ENCODE measurements at regions of chr3 and their contacts with region 1.

Region 1: GRCh38 chr3:52446631-52447511 is 2.0 kb upstream of the SEMA3G start:
- DNase-seq: peak; percentile 81
- H3K4me3 ChIP-seq: no peak overlapping the region
- H3K27ac ChIP-seq: no peak overlapping the region
- H3K4me1 ChIP-seq: peaks cover 0 to 17% (median 8%) of the 10 kb centered on the region in 4 donors
- H3K27me3 ChIP-seq: no peaks in the 10 kb centered on the region
- CTCF ChIP-seq: peak; percentile 98 to 100 (median 100)
- EP300 ChIP-seq: no peak
- POLR2A ChIP-seq: no peak

Region 2: DNA sequence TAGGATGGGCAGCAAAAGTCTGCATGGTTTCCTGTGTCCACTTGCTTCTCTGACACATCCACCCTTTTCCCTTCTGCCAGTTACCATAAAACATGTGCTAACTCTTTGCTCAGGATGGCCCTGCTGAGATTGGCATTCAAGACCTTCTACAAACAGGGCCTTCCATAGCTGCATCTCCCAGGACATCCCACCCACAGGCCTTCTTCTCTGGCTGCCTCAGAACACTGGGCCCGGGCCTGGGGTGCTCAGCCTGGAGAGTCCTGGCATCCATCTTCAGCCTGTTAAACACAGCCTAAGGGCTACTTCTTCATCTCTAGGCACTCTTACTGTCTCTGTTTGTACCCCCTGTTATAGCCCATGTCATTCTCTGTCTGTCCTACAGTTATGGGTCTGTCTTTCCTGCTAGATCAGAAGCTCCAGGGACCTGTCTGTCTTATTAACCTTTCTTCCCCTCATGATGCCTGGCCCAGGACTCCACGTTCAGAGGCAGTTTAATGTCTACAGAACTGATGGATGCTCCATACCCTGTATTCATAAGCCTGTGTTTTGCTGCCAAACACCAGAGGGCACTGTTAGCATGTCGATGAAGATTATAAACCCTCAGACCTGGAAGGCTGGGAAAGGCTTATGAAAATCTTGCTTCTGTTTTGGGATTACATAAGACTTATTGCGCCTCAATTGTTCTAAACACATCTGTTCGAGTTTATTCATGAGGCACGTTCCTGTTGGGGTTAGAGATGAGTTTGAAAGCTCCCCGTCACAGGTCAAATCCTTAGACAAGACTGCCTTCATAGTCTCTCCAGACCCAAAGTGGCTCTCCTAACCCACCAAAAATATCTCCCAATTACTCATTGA is 18.5 kb before region 1 on chr3:
- intact Hi-C with region 1: loop called (anchors 1 kb)
- DNase-seq: peak; percentile 76
- H3K4me3 ChIP-seq: no peak overlapping the region
- H3K27ac ChIP-seq: no peak overlapping the region
- H3K4me1 ChIP-seq: peaks cover 0 to 4% (median 2%) of the 10 kb centered on the region in 4 donors
- H3K27me3 ChIP-seq: no peaks in the 10 kb centered on the region
- CTCF ChIP-seq: peak; percentile 54 to 70 (median 58)
- EP300 ChIP-seq: no peak
- POLR2A ChIP-seq: no peak

Region 3: GRCh38 chr3:52739730-52740129 is 292.9 kb after region 1 on chr3:
- intact Hi-C with region 1: no loop called
- DNase-seq: no peak
- H3K4me3 ChIP-seq: no peak overlapping the region
- H3K27ac ChIP-seq: no peak overlapping the region
- H3K4me1 ChIP-seq: no peaks in the 10 kb centered on the region
- H3K27me3 ChIP-seq: no peaks in the 10 kb centered on the region
- CTCF ChIP-seq: no peak
- EP300 ChIP-seq: no peak
- POLR2A ChIP-seq: no peak

Measured in sigmoid colon (tissue), 7 donors.